ENCODE measurements at regions of chr10 and their contacts with region 1.

Region 1: DNA sequence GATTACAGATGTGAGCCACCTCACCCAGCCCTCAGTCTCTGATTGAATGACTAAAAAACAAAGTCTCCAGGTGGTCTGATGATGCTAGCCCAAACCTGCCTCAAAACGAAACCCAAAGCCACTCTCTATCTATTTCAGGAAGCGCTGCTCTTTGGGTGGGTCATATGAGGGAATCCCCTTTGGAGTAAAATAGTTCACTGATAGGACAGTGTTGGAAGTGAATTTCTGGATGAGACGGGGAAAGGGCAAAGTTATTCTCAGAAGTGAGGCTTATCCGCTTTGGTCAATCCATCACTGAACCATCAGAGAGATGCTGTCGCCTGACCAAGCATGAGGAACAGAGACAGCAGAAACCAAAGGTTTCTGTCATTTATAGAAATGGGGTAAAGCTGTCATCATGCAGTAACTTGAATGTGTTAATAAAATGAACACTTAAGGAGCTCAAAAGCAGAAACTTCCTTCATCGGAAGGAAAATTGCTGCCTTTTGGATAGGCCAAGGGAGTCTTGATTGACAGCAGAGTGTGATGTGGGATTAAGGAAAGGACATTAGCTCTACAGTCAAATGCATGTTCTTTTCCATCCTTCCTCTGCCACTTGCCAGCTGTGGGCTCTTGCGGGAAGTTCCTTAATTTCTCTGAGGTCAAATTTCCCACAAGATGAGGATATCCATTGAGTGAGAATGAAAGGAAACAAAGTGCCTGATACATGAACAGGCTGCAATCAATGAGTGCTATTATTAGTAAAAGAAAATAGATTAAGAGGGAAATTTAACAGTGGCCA is 64.9 kb upstream of the C1QL3 start:
- DNase-seq: peak; percentile 54
- ATAC-seq: peak; percentile 91
- H3K4me3 ChIP-seq: peak overlapping the region; percentile 34; the same call in 1 of the 2 replicates
- H3K27ac ChIP-seq: peak overlapping the region; percentile 76
- H3K4me1 ChIP-seq: peaks cover 29% of the 10 kb centered on the region
- H3K27me3 ChIP-seq: no peaks in the 10 kb centered on the region
- CTCF ChIP-seq: no peak
- EP300 ChIP-seq: peak; percentile 20 to 21; a peak in 1 of 4 replicates
- POLR2A ChIP-seq: no peak
- RAD21 ChIP-seq: 0 out of 2 replicates have a peak, but pooled peaks have one; percentile 13

Region 2: DNA sequence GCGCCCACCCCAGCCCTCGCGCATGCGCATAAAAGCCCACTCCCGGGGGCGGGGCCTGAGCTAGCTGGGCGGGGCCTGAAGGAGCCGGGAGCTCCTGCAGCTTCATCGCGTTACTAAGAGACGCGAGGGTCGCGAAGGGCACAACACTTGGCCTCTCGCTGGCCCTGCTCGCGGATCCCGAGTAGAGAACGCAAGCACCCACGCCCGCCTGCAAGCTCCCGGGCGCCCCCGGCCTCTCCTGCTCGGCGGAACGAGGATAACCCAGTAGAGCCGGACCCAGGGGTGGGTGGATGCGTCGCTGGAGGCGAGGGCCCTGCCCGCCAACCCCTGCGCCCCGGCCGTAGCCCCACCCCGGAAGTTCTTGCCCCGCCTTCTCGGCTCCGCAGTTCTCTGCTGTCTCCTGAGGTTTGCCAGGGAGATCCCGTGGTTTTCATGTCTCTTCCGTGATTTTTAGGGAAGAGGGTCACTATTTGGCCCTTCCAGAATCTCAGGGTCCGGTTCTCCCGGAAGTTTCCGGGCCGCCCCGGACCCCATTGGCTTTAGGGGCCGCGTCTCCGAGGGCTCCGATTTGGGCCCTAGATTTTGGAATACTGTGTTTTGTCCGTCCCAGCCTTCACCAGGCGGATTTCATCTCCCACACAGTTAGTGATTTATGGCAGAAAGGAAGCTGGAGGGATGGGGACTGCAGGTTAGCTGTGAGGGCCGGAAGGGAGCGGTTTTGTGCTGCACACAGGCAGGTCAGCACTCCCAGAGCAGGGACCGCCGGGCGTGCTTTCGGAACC is 1627.1 kb before region 1 on chr10 and contains the start of gene MEIG1:
- CTCF ChIA-PET with region 1: no interaction called
- POLR2A ChIA-PET with region 1: no interaction called
- RAD21 ChIA-PET with region 1: no interaction called
- SMC1A ChIA-PET with region 1: no interaction called
- in situ Hi-C with region 1: no loop called
- intact Hi-C with region 1: loop called (anchors 10 kb)
- DNase-seq: peak; percentile 60
- ATAC-seq: peak; percentile 93
- H3K4me3 ChIP-seq: peak within 1 kb of the TSS; percentile 72
- H3K27ac ChIP-seq: peak within 1 kb of the TSS; percentile 94
- H3K4me1 ChIP-seq: peaks cover 5% of the 10 kb centered on the region
- H3K27me3 ChIP-seq: no peaks in the 10 kb centered on the region
- CTCF ChIP-seq: no peak
- EP300 ChIP-seq: 0 out of 4 replicates have a peak, but pooled peaks of 1 of the 2 experiments have one; percentile 8
- POLR2A ChIP-seq: peak; percentile 22
- RAD21 ChIP-seq: no peak
- polyA plus RNA-seq, gene MEIG1: 0.79 to 0.80 TPM

Region 3: GRCh38 chr10:16570731-16571130 is 15.8 kb before region 1 on chr10:
- CTCF ChIA-PET with region 1: interaction called, 14 read pairs
- POLR2A ChIA-PET with region 1: interaction called, 8 read pairs
- RAD21 ChIA-PET with region 1: interaction called, 21 read pairs
- SMC1A ChIA-PET with region 1: interaction called, 29 read pairs
- in situ Hi-C with region 1: no loop called
- intact Hi-C with region 1: loop called (anchors 1 kb)
- DNase-seq: peak; percentile 69
- ATAC-seq: peak; percentile 96
- H3K4me3 ChIP-seq: peak overlapping the region; percentile 4; the same call in 1 of the 2 replicates
- H3K27ac ChIP-seq: peak overlapping the region; percentile 21; the same call in 1 of the 2 replicates
- H3K4me1 ChIP-seq: peaks cover 8% of the 10 kb centered on the region; the same call in 1 of the 2 replicates
- H3K27me3 ChIP-seq: no peaks in the 10 kb centered on the region
- CTCF ChIP-seq: no peak
- EP300 ChIP-seq: peak; percentile 13 to 78; a peak in 1 of 4 replicates
- POLR2A ChIP-seq: no peak
- RAD21 ChIP-seq: no peak

Region 4: DNA sequence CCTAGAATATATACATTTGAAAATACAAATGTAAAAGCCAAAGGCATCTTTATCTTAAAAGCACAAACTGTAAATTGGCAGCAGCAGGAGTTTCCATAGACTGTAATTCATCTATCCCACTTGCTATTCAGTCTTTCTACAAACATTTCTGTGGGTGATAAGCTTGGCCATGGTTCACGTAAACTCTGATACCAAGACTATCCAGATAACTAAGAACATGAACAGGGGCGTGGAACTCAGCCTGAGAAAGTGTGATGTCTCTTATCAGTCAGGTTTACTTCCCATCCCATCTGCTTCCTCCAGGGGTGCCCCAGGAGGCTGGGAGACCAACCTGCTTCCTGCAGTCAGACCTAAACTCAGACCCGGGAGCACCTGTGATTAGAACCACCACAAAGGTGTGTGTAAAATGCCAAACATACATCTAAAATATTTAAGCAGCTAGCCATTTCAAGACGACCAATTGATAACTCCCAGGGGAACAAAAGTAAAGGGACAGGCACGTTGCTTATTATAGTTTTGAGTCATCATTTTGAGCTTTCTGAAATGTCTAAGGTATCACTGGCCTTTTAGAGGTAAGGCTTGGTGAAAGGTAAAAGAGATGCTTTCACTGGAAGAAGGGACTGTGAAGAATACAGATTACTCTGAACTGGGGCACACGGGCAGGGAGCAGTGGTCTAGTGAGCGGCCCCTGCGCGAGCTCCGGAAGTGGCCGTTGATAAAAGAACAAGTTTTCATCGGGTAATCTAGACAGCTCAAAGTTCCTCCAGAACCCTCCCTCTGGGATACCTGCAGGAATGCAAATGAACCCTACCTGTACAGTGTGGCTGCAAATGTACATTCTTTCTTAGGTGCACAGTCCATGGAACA is 179.2 kb after region 1 on chr10:
- CTCF ChIA-PET with region 1: no interaction called
- POLR2A ChIA-PET with region 1: interaction called, 4 read pairs
- RAD21 ChIA-PET with region 1: no interaction called
- SMC1A ChIA-PET with region 1: no interaction called
- in situ Hi-C with region 1: no loop called
- intact Hi-C with region 1: loop called (anchors 5 kb)
- DNase-seq: no peak
- ATAC-seq: peak; percentile 86
- H3K4me3 ChIP-seq: no peak overlapping the region
- H3K27ac ChIP-seq: no peak overlapping the region
- H3K4me1 ChIP-seq: peaks cover 10% of the 10 kb centered on the region
- H3K27me3 ChIP-seq: no peaks in the 10 kb centered on the region
- CTCF ChIP-seq: no peak
- EP300 ChIP-seq: no peak
- POLR2A ChIP-seq: no peak
- RAD21 ChIP-seq: no peak

Region 5: DNA sequence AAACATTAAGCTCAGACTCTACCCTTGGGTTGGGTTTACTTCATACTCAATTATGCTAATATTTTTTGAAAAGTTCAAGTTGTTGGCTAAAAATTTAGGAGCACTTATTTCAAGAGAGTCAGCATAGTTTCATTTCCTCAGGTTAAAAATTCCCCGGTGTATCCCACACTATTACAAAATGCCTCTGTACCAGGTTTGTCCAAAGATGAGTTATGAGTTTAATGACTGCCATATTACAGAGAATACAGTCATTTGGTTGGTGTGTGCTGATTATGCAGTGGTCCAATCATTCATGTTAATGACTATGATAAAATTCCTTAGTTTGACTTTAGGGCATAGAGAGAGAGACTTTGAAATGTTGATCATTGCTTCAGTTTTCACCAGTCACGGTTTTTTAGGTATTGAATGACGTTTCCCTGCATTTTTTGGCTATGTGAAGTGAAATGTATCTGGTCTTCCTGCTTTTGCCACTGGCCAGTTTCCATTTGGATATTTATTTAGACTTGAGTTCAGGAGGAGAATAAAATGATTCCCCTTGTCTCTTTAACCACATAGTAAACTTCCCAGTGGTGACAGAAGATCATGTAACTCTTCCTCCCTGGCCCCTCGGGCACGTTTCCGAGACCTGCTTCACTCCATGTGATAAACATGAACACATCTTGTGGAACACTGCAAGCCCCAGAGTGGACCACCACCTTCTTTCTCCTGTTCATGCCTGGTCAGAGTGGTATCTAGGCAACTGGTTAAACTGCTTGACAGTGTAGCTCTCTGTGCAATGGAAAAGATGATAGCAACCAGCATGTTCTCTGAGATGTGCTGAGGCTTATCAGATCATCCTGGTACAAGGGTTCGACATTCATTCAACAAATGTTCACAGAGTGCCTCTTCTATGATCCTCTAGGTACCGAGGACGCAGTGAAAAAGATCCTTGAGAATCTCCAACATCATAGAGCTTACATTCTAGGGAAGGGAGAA is 1707.3 kb after region 1 on chr10:
- CTCF ChIA-PET with region 1: no interaction called
- POLR2A ChIA-PET with region 1: no interaction called
- RAD21 ChIA-PET with region 1: no interaction called
- SMC1A ChIA-PET with region 1: no interaction called
- in situ Hi-C with region 1: no loop called
- intact Hi-C with region 1: loop called (anchors 10 kb)
- DNase-seq: peak; percentile 31
- ATAC-seq: peak; percentile 84
- H3K4me3 ChIP-seq: no peak overlapping the region
- H3K27ac ChIP-seq: no peak overlapping the region
- H3K4me1 ChIP-seq: no peaks in the 10 kb centered on the region
- H3K27me3 ChIP-seq: no peaks in the 10 kb centered on the region
- CTCF ChIP-seq: no peak
- EP300 ChIP-seq: peak in 1 of 2 experiments; percentile 27; a peak in 1 of 4 replicates
- POLR2A ChIP-seq: no peak
- RAD21 ChIP-seq: no peak

Measured in GM12878 (cell line).